Activated CD4-positive, alpha-beta T cell treated with anti-CD3 and anti-CD28 coated beads, Interleukin-2, amount 10 ng/mL, durations not matched to agents 24 days and 14 days (primary cell): ENCODE measurements at regions of chr14 and their contacts with region 1.

Region 1: DNA sequence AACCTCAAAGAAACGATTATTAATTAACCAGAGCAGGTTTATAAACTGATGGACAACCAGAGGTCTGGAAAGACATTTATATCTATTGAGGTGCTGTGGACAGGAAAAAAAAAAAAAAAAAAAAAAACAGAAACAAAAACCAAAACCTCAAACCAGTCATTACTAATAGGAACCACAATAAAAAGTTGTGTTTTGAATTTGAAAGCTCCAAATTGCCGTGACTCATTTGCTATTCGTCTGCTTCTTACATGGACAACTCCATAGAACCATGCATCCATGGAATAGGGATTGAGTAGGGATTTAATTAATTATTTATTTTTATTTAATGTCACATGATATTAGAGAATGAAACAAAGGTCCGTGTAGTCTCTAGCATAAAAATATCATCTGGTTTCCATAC is 134.1 kb upstream of the SSTR1 start:
- DNase-seq: no peak
- H3K4me3 Mint-ChIP-seq: no peak overlapping the region
- H3K27ac Mint-ChIP-seq: no peak overlapping the region
- H3K4me1 Mint-ChIP-seq: peaks cover 21% of the 10 kb centered on the region
- H3K27me3 Mint-ChIP-seq: no peaks in the 10 kb centered on the region

Region 2: DNA sequence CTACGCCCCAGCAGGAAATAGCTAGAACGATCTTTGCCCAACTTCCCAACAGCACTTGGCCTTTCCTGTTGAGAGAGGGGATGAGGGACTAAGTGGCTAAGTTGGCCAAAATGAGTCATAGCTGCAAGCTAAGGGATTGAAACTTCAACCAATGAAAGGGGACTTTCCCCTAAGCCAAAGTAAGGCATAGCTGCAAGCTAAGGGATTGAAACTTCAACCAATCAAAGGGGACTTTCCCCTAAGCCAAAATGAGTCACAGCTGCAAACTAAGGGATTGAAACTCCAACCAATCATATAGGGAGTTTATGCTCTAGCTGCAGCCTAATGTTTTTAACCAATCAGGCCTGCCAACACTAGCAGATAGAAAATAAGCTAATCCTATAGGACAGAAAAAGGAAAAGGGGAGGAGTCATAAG is 33.6 kb after region 1 on chr14:
- intact Hi-C with region 1: loop called (anchors 2 kb)
- DNase-seq: no peak
- H3K4me3 Mint-ChIP-seq: no peak overlapping the region
- H3K27ac Mint-ChIP-seq: no peak overlapping the region
- H3K4me1 Mint-ChIP-seq: peaks cover 16% of the 10 kb centered on the region
- H3K27me3 Mint-ChIP-seq: no peaks in the 10 kb centered on the region

Region 3: GRCh38 chr14:38125481-38126037 is 51.9 kb after region 1 on chr14:
- intact Hi-C with region 1: no loop called
- DNase-seq: no peak
- H3K4me3 Mint-ChIP-seq: no peak overlapping the region
- H3K27ac Mint-ChIP-seq: no peak overlapping the region
- H3K4me1 Mint-ChIP-seq: peaks cover 7% of the 10 kb centered on the region
- H3K27me3 Mint-ChIP-seq: no peaks in the 10 kb centered on the region